ENCODE measurements at regions of chr1 and their contacts with region 1.

Region 1: DNA sequence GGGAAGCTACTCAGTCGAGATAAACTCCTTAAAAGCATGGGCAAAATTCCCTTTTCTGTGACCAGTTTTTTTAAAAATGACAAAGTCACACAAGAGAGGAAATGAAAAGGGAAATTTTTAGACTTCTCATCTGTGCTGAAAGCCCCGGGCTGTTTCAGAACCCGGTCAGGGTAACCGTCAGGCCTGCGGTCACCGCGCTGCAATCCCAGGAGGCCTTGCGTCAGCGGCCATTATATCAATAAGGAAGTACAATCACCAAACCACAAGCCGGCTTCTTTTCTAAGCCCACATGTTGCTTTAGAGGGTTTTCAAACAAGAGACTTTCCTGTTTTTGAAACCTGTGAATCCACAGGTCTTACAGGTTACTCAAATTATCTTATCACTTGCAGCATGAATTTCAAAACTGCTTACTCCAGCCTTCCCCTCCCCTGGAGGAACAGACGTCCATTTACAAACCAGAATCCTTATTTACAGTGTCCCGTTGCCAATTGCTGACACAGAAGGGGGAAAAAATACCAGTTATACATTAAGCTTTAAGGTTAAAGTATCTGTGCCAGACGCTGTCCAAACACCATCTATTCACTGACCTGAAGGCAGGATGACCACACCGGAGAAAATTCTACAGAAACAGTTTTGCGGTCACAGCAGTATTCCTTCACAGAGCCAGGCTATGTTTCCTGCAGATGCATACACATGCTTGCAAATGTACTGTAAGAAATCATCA is 165.3 kb downstream of the TOMM20 start:
- DNase-seq: peak; percentile 98
- ATAC-seq: peak; percentile 79
- H3K4me3 Mint-ChIP-seq: peak overlapping the region; percentile 56
- H3K27ac Mint-ChIP-seq: peak overlapping the region; percentile 93
- H3K4me1 Mint-ChIP-seq: peaks cover 70% of the 10 kb centered on the region
- H3K27me3 Mint-ChIP-seq: no peaks in the 10 kb centered on the region
- CTCF ChIP-seq: no peak

Region 2: GRCh38 chr1:234730770-234731568 is 232.4 kb before region 1 on chr1:
- CTCF ChIA-PET with region 1: no interaction called
- POLR2A ChIA-PET with region 1: no interaction called
- intact Hi-C with region 1: loop called (anchors 5 kb)
- DNase-seq: peak; percentile 83
- ATAC-seq: peak; percentile 87
- H3K4me3 Mint-ChIP-seq: peak overlapping the region; percentile 47
- H3K27ac Mint-ChIP-seq: peak overlapping the region; percentile 94
- H3K4me1 Mint-ChIP-seq: peaks cover 77% of the 10 kb centered on the region
- H3K27me3 Mint-ChIP-seq: no peaks in the 10 kb centered on the region
- CTCF ChIP-seq: peak; percentile 33

Region 3: DNA sequence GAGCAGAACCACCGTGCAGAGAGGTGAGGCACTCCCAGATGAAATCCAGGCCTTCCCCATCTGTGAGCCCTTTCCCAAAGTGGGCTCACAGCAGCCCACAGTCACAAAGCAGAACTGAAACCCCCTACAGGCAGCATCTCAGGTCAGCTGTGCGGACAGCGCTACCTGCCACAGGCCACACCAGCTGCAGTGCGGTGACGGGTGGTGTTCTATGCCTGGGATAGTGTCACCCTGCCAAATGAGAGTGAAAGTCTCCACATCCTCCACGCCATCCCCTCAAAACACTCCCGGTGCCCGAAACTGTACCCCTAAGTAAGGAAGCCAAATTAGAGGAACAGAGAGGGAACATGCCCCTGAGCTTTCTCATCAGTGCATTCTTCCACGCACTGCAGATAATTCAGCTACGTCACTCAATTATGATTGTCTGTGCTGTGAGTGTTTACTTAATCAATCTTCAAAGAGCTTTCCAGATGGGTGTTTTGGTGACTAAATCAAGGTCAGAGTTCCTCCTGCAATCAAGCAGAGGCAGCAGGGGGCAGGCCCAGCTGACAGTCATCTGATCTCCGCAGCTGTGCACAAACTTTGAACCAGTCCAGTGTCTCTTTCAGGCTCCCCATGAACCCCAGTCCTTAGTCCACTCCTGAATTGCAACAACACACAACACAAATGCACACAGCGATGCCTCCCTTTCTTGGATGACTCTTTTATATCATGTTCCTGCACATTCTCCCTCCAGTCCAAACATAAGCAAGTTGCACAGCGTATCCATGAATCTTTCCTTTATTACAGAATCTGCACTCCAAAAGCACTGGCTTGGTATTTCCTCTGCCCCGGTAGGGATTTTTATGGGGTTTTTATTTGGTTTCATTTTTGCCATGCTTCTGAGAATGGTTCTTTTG is 15.3 kb after region 1 on chr1:
- CTCF ChIA-PET with region 1: interaction called, 12 read pairs
- POLR2A ChIA-PET with region 1: interaction called, 12 read pairs
- intact Hi-C with region 1: loop called (anchors 2 kb)
- DNase-seq: peak; percentile 81
- ATAC-seq: peak; percentile 52
- H3K4me3 Mint-ChIP-seq: peak overlapping the region; percentile 68
- H3K27ac Mint-ChIP-seq: peak overlapping the region; percentile 92
- H3K4me1 Mint-ChIP-seq: peaks cover 69% of the 10 kb centered on the region
- H3K27me3 Mint-ChIP-seq: no peaks in the 10 kb centered on the region
- CTCF ChIP-seq: no peak

Region 4: DNA sequence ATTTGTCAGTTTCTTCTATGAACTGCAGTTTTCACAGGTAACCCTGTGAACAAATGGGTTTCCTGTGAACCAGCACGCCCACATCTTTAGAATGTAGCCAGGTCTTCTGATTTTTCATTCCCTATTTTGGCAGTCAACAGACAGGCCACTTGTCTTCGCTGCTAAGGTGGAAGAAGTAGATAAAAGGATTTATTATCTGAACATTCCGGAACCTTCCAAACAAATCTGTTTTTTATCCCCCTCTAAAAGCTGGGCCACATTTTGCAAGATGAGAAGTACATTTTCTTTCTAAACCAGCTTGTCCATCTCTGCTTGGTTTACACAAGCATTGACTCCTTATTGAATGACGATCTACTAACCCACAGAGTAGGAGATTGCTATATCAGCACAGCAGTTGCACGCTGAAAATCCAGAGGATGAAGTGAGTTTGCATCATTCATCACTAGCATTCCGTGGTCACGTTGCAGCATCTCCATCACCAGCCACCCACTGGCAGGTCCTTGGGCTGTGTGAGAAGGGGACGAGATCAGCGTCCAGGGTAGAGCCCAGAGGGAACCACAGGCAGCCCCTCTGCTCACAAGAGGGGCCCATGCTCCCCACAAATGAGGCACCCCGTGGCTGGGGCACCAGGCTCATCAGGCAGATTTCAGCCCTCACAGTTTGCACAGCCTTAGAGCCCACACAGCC is 81.8 kb after region 1 on chr1:
- CTCF ChIA-PET with region 1: no interaction called
- POLR2A ChIA-PET with region 1: no interaction called
- intact Hi-C with region 1: no loop called
- DNase-seq: no peak
- ATAC-seq: no peak
- H3K4me3 Mint-ChIP-seq: no peak overlapping the region
- H3K27ac Mint-ChIP-seq: peak overlapping the region; percentile 30
- H3K4me1 Mint-ChIP-seq: peaks cover 44% of the 10 kb centered on the region
- H3K27me3 Mint-ChIP-seq: no peaks in the 10 kb centered on the region
- CTCF ChIP-seq: no peak